ENCODE measurements at regions of chr1 and their contacts with region 1.

Region 1: DNA sequence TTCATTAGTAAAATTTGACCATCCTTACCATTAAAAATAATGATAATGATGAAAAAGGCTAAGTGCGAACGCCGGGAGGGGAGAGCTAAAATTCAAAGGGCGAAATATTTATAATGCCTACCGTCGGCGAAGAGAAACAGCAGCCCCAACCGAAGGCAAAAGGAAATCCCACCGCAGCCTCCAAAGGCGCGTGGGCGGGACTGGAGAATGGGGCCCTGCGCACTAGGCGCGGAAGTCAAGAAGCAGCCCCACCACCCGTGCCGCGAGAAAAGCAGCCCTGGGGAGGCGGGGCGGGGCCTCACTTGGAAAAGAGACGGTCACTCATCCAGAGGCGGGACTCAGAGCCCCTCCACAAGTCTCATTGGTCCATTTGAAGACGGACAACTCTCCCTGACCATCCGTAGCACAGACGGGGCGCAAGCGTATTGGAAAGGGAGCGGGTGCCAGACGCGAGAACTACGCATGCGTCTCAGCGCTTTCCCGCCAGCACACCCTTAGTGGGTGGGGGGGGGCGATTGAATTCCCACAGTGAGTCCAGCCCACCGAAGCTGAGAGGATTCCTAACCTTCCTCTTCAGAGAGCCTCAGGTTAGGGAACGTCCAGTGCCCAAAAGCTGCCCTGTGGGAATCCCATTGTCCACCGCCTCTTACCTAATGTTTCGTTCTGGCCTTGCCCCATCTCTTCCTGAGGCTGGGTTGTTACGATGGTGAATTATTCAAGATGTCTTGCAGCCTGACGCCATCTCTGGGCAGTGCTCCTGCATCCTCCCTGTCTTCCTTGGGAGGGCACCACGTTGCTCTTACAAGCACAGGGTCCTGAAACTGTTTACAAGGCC is 19.0 kb downstream of the MTX1 start:
- DNase-seq: peak; percentile 99
- ATAC-seq: peak; percentile 98
- H3K4me3 Mint-ChIP-seq: peak overlapping the region; percentile 96
- H3K27ac Mint-ChIP-seq: peak overlapping the region; percentile 97
- H3K4me1 Mint-ChIP-seq: peaks cover 27% of the 10 kb centered on the region
- H3K27me3 Mint-ChIP-seq: no peaks in the 10 kb centered on the region

Region 2: DNA sequence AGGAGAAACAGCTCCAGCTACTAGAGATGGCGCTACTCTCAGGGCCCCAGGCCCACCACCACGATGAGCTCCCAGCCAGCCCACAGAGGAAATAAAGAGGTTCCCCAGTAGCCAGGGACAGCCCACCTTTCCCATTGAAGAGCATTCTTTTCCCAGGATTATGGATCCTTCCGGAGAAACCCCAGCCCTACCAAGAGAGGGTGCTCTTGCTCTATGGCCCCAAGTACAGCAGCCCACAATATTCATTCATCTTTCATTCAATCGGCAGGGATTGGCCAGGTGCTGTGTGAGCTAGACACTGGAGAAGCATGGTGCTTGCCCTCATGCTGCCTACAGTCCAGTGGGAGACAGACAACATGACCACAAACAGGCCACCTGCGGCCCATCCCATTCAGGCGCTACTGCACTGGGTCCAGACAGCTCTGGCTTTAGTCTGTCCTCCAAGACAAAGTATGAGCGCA is 320.8 kb before region 1 on chr1:
- CTCF ChIA-PET with region 1: no interaction called
- POLR2A ChIA-PET with region 1: no interaction called
- intact Hi-C with region 1: no loop called
- DNase-seq: no peak
- ATAC-seq: peak; percentile 47
- H3K4me3 Mint-ChIP-seq: no peak overlapping the region
- H3K27ac Mint-ChIP-seq: no peak overlapping the region
- H3K4me1 Mint-ChIP-seq: no peaks in the 10 kb centered on the region
- H3K27me3 Mint-ChIP-seq: no peaks in the 10 kb centered on the region

Region 3: GRCh38 chr1:155208541-155209311 is 18.8 kb before region 1 on chr1 and contains the start of gene MTX1:
- CTCF ChIA-PET with region 1: interaction called, 20 read pairs
- POLR2A ChIA-PET with region 1: interaction called, 4 read pairs
- intact Hi-C with region 1: loop called (anchors 1 kb)
- DNase-seq: peak; percentile 93
- ATAC-seq: peak; percentile 87
- H3K4me3 Mint-ChIP-seq: peak within 1 kb of the TSS; percentile 89
- H3K27ac Mint-ChIP-seq: peak within 1 kb of the TSS; percentile 86
- H3K4me1 Mint-ChIP-seq: peaks cover 29% of the 10 kb centered on the region
- H3K27me3 Mint-ChIP-seq: no peaks in the 10 kb centered on the region
- total RNA-seq, gene MTX1: 52.8 to 52.9 TPM

Measured in activated CD4-positive, alpha-beta T cell treated with anti-CD3 and anti-CD28 coated beads for 36 hours (primary cell).